HCT116 (cell line): ENCODE measurements at regions of chr11 and their contacts with region 1.

Region 1: DNA sequence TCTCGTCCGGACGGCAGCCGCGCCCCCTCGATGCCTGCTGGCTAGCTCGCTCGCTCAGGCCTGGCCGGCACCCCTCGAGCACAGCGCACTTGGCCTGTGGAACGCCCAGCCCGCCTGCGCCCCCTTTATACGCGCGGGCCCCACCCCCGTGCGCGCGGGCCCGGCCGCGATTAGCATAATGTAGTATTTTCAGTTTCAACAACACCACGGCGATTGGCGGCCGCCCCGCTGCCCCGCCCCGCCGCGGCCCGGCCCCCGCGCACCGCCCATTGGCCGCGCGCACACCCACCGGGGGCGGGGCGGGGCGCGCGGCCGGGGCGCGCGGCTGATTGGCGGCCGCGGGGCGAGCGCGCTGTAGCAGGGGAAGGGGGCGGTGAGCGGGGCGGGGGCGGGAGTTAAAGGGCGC is at the start of gene CDKN1C:
- DNase-seq: peak; percentile 59
- ATAC-seq: peak; percentile 69
- H3K4me3 ChIP-seq: peak within 1 kb of the TSS; percentile 55 to 63
- H3K27ac ChIP-seq: peak within 1 kb of the TSS; percentile 67; the same call in 1 of the 2 replicates
- H3K4me1 ChIP-seq: peaks cover 11 to 37% of the 10 kb centered on the region in 2 experiments
- H3K27me3 ChIP-seq: no peaks in the 10 kb centered on the region
- CTCF ChIP-seq: no peak
- POLR2A ChIP-seq: peak; percentile 93
- RAD21 ChIP-seq: no peak
- total RNA-seq, gene CDKN1C: 24.0 TPM

Region 2: GRCh38 chr11:2428322-2428795 is 457.3 kb before region 1 on chr11:
- CTCF ChIA-PET with region 1: interaction called, 5 read pairs
- POLR2A ChIA-PET with region 1: no interaction called
- RAD21 ChIA-PET with region 1: no interaction called
- intact Hi-C with region 1: loop called (anchors 1 kb)
- DNase-seq: peak; percentile 52
- ATAC-seq: peak; percentile 95
- H3K4me3 ChIP-seq: no peak overlapping the region
- H3K27ac ChIP-seq: no peak overlapping the region
- H3K4me1 ChIP-seq: no peaks in the 10 kb centered on the region
- H3K27me3 ChIP-seq: no peaks in the 10 kb centered on the region
- CTCF ChIP-seq: peak; percentile 97 to 99 (median 97)
- POLR2A ChIP-seq: no peak
- RAD21 ChIP-seq: peak; percentile 99

Region 3: DNA sequence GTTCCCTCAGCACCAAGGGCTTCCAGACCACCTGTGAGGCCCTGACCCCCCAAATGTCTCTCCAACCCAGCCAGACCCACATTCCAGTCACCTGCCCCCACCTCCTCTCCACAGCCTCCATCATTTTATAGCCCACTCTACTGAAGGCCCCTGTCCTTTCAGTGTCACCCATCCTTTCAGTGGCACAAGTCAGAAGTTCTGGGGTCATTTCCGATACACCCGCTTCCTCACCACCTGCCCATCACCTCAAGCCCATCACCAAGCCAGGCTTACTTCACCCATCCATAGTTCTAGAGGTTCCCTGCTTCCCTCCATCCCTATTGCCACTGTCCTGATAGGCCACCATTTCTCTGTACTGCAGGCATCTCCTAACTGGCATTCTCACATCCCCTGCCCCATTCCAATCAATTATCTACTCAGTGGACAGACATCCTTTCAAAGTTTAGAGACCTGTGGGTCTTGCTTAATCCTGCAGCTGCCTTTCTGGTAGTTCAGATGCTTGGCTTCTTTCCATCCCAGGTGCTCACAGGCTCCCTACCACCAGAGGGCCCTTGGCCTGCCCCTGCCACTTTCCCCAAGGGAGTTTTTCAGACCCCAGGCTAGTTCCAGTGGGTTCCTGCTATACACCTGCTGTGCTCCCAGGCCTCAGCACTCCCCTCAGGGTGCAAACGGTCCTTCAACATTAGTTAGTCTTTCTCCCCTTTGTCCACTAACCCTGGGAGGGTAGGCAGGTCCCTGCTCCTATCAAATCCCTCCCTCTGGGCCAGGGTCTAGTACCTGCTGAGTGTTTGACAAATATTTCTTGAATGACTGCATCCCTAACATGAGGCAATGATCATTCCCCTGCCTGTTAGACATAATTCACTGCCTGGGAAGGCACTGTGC is 193.4 kb before region 1 on chr11:
- CTCF ChIA-PET with region 1: no interaction called
- POLR2A ChIA-PET with region 1: no interaction called
- RAD21 ChIA-PET with region 1: no interaction called
- intact Hi-C with region 1: loop called (anchors 2 kb)
- DNase-seq: no peak
- ATAC-seq: peak; percentile 51; the same call in 1 of the 2 replicates
- H3K4me3 ChIP-seq: no peak overlapping the region
- H3K27ac ChIP-seq: no peak overlapping the region
- H3K4me1 ChIP-seq: no peaks in the 10 kb centered on the region
- H3K27me3 ChIP-seq: no peaks in the 10 kb centered on the region
- CTCF ChIP-seq: peak; percentile 33 to 50 (median 49); a peak in 5 of 6 replicates
- POLR2A ChIP-seq: no peak
- RAD21 ChIP-seq: peak; percentile 48; the same call in 1 of the 2 replicates

Region 4: GRCh38 chr11:3203221-3204043 is 317.8 kb after region 1 on chr11:
- CTCF ChIA-PET with region 1: no interaction called
- POLR2A ChIA-PET with region 1: no interaction called
- RAD21 ChIA-PET with region 1: no interaction called
- intact Hi-C with region 1: no loop called
- DNase-seq: no peak
- ATAC-seq: no peak
- H3K4me3 ChIP-seq: no peak overlapping the region
- H3K27ac ChIP-seq: no peak overlapping the region
- H3K4me1 ChIP-seq: no peaks in the 10 kb centered on the region
- H3K27me3 ChIP-seq: peaks cover 22% of the 10 kb centered on the region; the same call in 1 of the 2 replicates
- CTCF ChIP-seq: no peak
- POLR2A ChIP-seq: no peak
- RAD21 ChIP-seq: no peak